ENCODE measurements at regions of chr5 and their contacts with region 1.

Region 1: DNA sequence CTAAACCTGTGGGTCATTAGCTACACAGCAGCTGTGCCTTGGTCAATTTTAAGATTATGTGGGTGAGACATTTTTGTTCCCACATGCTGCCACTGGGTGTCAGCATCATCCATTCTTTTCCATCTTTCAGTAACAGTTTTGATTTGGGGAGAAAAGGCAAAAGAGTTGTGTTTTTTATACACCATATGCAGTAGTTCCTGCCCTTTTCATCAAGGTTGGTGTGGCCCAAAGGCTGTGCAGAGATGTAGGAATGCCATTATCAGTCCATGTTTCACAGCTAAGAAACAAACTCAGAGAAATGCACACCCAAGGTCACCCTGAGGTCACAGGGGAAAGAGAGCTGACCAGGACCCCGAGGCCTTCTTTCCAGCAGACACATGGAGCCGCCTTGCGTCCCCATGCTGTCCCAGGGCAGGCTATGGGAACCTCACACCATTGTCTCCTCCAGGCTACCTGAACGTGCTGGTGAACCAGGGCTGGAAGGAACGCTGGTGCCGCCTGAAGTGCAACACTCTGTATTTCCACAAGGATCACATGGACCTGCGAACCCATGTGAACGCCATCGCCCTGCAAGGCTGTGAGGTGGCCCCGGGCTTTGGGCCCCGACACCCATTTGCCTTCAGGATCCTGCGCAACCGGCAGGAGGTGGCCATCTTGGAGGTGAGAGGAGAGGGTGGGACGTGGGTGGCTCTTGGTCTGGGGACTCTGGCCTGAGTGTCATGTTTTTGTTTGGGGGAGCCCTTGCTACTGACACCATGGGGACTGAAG is 27.8 kb upstream of the GRPEL2 start:
- DNase-seq: peak; percentile 30
- ATAC-seq: peak; percentile 75
- H3K4me3 ChIP-seq: no peak overlapping the region
- H3K27ac ChIP-seq: no peak overlapping the region
- H3K4me1 ChIP-seq: no peaks in the 10 kb centered on the region; the same call in 1 of the 2 replicates
- H3K27me3 ChIP-seq: no peaks in the 10 kb centered on the region
- CTCF ChIP-seq: peak; percentile 82

Region 2: DNA sequence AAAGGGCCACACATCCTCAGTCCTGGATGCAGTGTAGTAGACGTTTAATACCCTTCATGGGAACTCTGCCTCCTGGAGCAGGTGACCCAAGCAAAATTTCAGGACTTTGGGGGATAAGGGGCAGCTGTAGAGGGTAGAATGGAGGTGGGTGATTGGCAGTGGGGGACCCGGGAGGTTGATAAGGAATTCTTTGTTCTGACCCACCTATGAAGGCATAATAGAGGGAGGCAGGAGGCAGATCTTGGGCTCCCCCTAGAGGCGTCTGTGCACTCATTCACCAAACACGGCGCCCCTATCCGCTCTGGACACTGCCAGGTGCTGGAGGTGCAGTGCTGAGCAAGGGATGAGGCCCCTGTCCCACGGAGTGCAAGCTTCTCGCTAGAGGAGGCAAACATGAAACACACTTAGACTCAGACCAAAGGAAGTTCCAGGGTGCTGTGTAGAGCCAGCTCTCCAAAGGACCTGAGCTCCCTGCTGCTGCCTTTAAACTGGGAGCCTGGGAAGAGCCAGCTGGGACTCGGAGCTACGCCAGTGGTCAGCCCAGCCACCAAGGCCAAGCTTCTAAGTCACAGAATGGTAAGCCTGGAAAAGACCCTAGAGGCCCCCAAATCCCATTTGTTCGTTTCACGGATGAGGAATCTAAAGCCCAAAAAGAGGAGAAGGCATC is 54.0 kb after region 1 on chr5:
- CTCF ChIA-PET with region 1: interaction called, 3 read pairs
- POLR2A ChIA-PET with region 1: no interaction called
- in situ Hi-C with region 1: no loop called
- intact Hi-C with region 1: loop called (anchors 1 kb)
- DNase-seq: peak; percentile 43
- ATAC-seq: peak; percentile 92
- H3K4me3 ChIP-seq: no peak overlapping the region
- H3K27ac ChIP-seq: no peak overlapping the region
- H3K4me1 ChIP-seq: no peaks in the 10 kb centered on the region
- H3K27me3 ChIP-seq: no peaks in the 10 kb centered on the region
- CTCF ChIP-seq: peak; percentile 96

Region 3: DNA sequence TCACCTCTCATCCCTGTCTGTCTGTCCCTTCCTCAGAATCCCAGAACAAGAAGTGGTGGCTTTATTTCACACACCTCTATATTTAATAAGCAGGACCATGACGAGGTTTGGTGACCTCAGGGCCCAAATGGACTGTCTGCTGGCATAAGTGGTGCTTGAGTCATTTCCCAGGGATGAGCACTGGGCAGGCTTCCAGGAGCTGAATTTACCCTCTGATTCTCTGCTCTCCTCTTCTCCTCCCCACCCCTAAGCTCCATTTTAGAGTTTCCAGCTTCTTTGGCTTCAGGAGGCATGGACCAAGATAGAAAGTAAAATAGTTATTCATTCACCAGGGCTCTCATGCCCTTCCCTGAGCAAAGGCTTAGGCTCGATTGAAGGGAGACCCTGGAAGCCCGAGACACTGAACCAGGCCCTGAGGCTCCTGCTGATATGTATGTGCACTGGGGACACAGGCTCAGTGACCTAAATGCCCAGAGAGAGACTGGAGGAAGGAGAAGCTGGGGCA is 481.7 kb after region 1 on chr5:
- CTCF ChIA-PET with region 1: no interaction called
- POLR2A ChIA-PET with region 1: no interaction called
- in situ Hi-C with region 1: no loop called
- intact Hi-C with region 1: no loop called
- DNase-seq: peak; percentile 45
- ATAC-seq: no peak
- H3K4me3 ChIP-seq: no peak overlapping the region
- H3K27ac ChIP-seq: no peak overlapping the region
- H3K4me1 ChIP-seq: peaks cover 17% of the 10 kb centered on the region
- H3K27me3 ChIP-seq: no peaks in the 10 kb centered on the region
- CTCF ChIP-seq: no peak

Measured in Panc1 (cell line).